ENCODE measurements at regions of chr20 and their contacts with region 1.

Region 1: DNA sequence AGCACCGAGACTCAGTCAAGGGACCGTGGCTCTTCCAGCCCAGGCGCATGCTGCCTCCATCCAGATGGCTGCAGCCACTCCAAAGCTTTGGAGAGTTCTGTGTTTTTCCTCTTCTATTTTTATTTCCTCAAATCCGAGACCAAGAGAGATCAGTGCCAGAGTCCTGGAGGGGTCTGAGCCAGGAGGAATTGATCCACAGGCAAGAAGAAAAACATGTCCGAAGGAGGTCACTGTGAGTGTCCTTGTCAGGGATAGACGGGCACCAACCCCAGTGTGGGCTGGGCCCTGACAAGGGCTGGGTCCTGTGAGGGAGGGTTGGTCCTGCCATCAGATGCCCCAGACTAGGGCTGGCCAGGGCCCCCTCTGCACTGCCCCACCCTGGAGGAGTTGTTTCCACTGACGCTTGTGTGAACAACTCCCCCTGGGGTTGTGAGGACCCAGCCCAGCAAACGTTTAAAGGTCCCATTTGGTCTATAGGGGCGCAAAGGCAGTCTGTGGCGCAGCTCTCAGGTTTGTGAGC is 104.2 kb downstream of the BMP7 start:
- DNase-seq: no peak
- ATAC-seq: peak; percentile 83

Region 2: DNA sequence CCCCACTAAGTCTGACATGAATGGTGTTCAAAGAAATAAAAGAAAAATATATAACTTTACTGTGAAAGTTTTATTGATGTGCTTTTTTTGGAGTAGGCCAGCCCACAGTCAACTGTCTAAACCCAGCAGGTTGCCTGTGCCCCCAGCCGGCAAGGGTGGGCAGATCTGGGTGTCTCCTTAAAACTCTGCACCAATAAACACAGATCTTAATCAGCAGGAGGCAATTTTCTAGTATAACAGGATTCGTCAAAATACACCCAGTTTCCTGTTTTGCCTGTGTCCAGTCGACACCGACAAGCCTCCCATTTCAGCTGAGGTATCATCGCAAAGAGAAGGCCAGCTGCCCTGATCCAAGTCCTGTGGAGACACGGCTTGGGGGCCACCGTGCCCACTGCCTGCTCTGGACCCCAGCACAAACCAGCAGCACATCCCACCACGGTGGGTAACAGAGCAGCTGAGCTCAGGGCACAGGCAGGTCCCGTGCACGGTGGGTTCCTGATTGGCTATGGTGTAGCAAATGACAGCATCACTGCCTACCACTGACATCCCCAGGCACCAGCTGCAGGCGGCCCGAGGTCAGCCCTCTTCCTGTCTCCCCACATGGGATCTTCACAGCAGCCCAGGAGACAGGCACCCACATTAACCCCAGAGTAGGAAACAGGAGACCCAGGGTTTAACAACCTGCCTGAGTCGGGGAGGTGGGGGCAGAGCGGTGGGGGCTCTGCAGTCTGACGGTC is 88.6 kb after region 1 on chr20:
- intact Hi-C with region 1: no loop called
- DNase-seq: no peak
- ATAC-seq: peak; percentile 23

Region 3: DNA sequence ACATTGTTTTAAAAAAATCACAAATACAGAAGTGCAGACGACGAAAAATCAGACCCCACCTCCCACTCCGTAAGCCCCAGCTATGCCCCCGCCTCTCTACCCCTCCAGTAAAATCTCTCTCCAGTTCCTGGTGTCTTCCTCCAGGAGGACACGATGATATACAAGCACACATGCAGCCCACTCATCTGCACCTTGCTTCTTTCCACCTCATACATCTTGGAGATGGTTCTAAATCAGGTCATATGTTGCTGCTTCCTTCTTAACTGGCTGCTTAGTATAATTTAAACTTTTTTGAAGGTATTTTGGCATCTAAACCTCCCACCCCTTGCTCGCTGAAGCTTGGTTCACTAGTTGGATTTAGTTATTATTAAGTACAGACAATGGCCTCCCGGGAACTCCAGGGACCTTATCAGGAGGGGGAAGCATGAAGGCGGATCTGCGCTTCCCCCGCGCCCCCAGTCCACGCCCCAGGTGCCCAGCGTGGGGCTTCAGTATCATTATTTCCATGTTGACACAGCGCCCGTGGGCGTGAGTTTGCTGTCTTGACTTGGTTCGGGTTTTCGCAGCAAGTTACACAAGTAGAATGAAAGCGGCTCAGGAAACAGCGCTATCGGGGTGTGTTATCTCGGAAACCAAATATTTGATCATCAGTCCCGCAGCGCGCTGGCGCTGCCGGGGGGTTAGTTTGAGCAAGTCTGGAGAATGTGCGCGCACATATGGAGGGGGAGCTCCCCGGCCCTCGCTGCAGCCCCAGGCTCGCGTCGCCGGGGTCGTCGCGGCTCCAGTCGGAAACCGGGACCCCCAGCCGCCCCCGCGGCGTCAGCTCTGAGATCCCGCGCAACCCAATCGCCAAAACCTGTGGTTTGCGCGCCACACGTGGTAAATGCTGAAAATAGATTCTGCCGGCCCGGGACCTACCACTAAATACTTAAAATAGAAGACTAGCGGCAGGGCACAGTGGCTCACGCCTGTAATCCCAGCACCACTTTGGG is 101.9 kb after region 1 on chr20:
- intact Hi-C with region 1: loop called (anchors 2 kb)
- DNase-seq: no peak
- ATAC-seq: peak; percentile 20

Region 4: DNA sequence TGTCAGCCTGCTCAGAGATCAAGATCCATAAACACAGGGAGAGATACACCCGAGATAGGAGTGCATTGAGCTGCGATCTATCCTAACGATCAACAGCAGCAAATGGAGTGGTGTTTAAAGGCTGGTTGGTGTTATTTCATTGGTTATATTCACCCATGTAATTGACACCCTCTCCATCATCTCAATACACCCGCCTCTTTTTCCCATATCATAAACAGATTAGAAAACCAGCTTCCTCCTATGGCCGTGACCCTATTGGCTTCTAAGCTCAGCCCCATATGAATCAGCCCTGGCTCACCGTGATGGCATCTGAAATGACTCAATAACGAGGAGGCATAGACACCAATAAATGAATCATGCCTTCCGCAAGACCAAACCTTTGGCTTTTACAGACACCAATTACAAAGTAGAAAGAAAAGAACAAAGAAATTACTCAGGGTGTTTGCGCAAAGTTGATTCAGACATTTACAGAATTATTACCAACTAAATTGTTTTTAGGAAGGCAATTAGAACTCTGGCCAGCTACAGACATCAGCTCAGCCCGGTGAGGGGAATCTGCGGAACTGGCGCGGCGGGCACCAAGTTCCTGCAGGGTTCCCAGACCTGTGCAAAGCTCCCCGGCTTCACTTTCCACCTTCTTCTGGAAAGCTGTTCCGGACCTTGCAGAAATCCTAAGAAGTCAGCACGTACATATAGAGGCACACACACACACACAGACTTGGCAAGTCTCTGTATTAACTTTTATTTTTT is 536.1 kb after region 1 on chr20:
- intact Hi-C with region 1: no loop called
- DNase-seq: no peak
- ATAC-seq: no peak